ENCODE measurements at regions of chr2 and their contacts with region 1.

Region 1: GRCh38 chr2:136362676-136363390 is 244.9 kb upstream of the CXCR4 start:
- DNase-seq: peak; percentile 65
- ATAC-seq: peak; percentile 82
- H3K4me3 Mint-ChIP-seq: no peak overlapping the region
- H3K27ac Mint-ChIP-seq: peak overlapping the region; percentile 63
- H3K4me1 Mint-ChIP-seq: peaks cover 54% of the 10 kb centered on the region
- H3K27me3 Mint-ChIP-seq: peaks cover 12% of the 10 kb centered on the region

Region 2: GRCh38 chr2:136052369-136053362 is 310.2 kb before region 1 on chr2:
- CTCF ChIA-PET with region 1: no interaction called
- POLR2A ChIA-PET with region 1: no interaction called
- intact Hi-C with region 1: loop called (anchors 1 kb)
- DNase-seq: peak; percentile 20
- ATAC-seq: peak; percentile 21
- H3K4me3 Mint-ChIP-seq: no peak overlapping the region
- H3K27ac Mint-ChIP-seq: peak overlapping the region; percentile 91
- H3K4me1 Mint-ChIP-seq: peaks cover 79% of the 10 kb centered on the region
- H3K27me3 Mint-ChIP-seq: no peaks in the 10 kb centered on the region

Region 3: GRCh38 chr2:136305517-136306192 is 57.2 kb before region 1 on chr2:
- CTCF ChIA-PET with region 1: interaction called, 3 read pairs
- POLR2A ChIA-PET with region 1: interaction called, 4 read pairs
- intact Hi-C with region 1: loop called in 1 of 2 experiments (anchors 1 kb)
- DNase-seq: peak; percentile 84
- ATAC-seq: peak; percentile 99
- H3K4me3 Mint-ChIP-seq: no peak overlapping the region
- H3K27ac Mint-ChIP-seq: peak overlapping the region; percentile 88
- H3K4me1 Mint-ChIP-seq: peaks cover 33% of the 10 kb centered on the region
- H3K27me3 Mint-ChIP-seq: peaks cover 5% of the 10 kb centered on the region

Region 4: DNA sequence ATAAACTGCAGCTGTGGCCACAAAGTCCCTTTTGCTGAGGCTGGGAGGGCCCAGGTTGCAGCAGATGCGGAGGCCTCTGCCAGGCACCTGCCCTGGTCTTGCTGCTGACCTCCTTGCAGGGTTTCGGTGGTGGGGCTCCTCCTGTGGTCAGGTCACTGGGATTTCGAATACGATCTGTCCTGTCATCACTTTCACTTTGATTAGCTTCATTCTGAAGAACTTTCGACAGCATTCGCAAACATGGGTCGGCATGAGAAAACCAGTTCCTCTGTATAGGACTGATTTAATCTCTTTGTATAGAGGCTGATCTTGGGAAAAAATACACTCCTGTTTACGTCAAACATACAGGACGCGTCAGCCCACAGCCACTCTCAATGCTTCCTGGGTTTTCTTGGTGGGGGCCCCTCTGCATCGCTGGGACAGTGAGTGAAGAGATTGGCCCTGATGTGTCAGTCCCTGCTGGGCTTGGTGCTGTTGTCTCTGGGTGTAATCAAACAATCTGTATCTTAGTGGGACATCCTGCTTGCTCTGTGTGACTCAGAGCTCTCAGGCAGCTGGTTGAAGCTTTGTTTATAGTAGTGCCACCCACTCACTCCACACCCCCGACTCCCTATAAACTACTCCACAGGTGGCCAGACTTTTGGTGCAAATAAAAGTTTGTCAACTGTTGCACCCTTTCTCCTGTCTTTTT is 35.5 kb before region 1 on chr2:
- CTCF ChIA-PET with region 1: no interaction called
- POLR2A ChIA-PET with region 1: interaction called, 5 read pairs
- intact Hi-C with region 1: loop called (anchors 1 kb)
- DNase-seq: peak; percentile 88
- ATAC-seq: peak; percentile 95
- H3K4me3 Mint-ChIP-seq: peak overlapping the region; percentile 56
- H3K27ac Mint-ChIP-seq: peak overlapping the region; percentile 92
- H3K4me1 Mint-ChIP-seq: peaks cover 69% of the 10 kb centered on the region
- H3K27me3 Mint-ChIP-seq: no peaks in the 10 kb centered on the region